Activated CD8-positive, alpha-beta T cell treated with anti-CD3 and anti-CD28 coated beads, Interleukin-2, amount 10 ng/mL, durations not matched to agents 7 days and 5 days (primary cell): ENCODE measurements at regions of chr7 and their contacts with region 1.

Region 1: GRCh38 chr7:103148994-103149807 is at the start of gene NAPEPLD:
- DNase-seq: peak; percentile 68
- ATAC-seq: peak; percentile 89
- H3K4me3 Mint-ChIP-seq: peak within 1 kb of the TSS; percentile 97
- H3K27ac Mint-ChIP-seq: peak within 1 kb of the TSS; percentile 97
- H3K4me1 Mint-ChIP-seq: peaks cover 37% of the 10 kb centered on the region
- H3K27me3 Mint-ChIP-seq: no peaks in the 10 kb centered on the region
- total RNA-seq, gene NAPEPLD: 6.0 to 6.8 TPM

Region 2: GRCh38 chr7:103074519-103075336 is 74.5 kb before region 1 on chr7 and contains the starts of genes ARMC10 and FBXL13:
- CTCF ChIA-PET with region 1: interaction called, 4 read pairs
- POLR2A ChIA-PET with region 1: interaction called, 18 read pairs
- DNase-seq: peak; percentile 90
- ATAC-seq: peak; percentile 90
- H3K4me3 Mint-ChIP-seq: peak within 1 kb of the TSS; percentile 97
- H3K27ac Mint-ChIP-seq: peak within 1 kb of the TSS; percentile 93
- H3K4me1 Mint-ChIP-seq: peaks cover 35% of the 10 kb centered on the region
- H3K27me3 Mint-ChIP-seq: no peaks in the 10 kb centered on the region
- total RNA-seq, gene ARMC10: 33.2 to 35.7 TPM
- total RNA-seq, gene FBXL13: 0.13 to 0.34 TPM